H1 (cell line): ENCODE measurements at regions of chr13 and their contacts with region 1.

Region 1: GRCh38 chr13:36346222-36347083 is at the start of gene SPART:
- DNase-seq: peak; percentile 49 to 91
- H3K4me3 ChIP-seq: peak within 1 kb of the TSS; percentile 61 to 90 (median 84)
- H3K27ac ChIP-seq: peak within 1 kb of the TSS; percentile 85
- H3K4me1 ChIP-seq: peaks cover 0 to 3% (median 3%) of the 10 kb centered on the region in 4 experiments; a peak in 3 of 7 replicates
- H3K27me3 ChIP-seq: no peaks in the 10 kb centered on the region; a peak in 1 of 7 replicates
- CTCF ChIP-seq: peak; percentile 87 to 96 (median 89)
- EP300 ChIP-seq: no peak
- POLR2A ChIP-seq: no peak
- RAD21 ChIP-seq: peak; percentile 84 to 85
- total RNA-seq, gene SPART: 68.2 and 74.1 TPM in 2 replicates

Region 2: GRCh38 chr13:36231236-36231635 is 115.2 kb before region 1 on chr13:
- CTCF ChIA-PET with region 1: no interaction called
- POLR2A ChIA-PET with region 1: no interaction called
- DNase-seq: no peak
- H3K4me3 ChIP-seq: no peak overlapping the region
- H3K27ac ChIP-seq: no peak overlapping the region
- H3K4me1 ChIP-seq: no peaks in the 10 kb centered on the region
- H3K27me3 ChIP-seq: peaks cover 0 to 1% (median 0%) of the 10 kb centered on the region in 4 experiments; a peak in 1 of 7 replicates
- CTCF ChIP-seq: no peak
- EP300 ChIP-seq: no peak
- POLR2A ChIP-seq: no peak
- RAD21 ChIP-seq: no peak

Region 3: GRCh38 chr13:36282818-36283445 is 63.5 kb before region 1 on chr13:
- CTCF ChIA-PET with region 1: interaction called, 15 read pairs
- POLR2A ChIA-PET with region 1: interaction called, 8 read pairs
- DNase-seq: no peak
- H3K4me3 ChIP-seq: no peak overlapping the region
- H3K27ac ChIP-seq: no peak overlapping the region
- H3K4me1 ChIP-seq: no peaks in the 10 kb centered on the region
- H3K27me3 ChIP-seq: no peaks in the 10 kb centered on the region
- CTCF ChIP-seq: peak in 2 of 3 experiments; percentile 55 to 62; a peak in 2 of 4 replicates
- EP300 ChIP-seq: no peak
- POLR2A ChIP-seq: no peak
- RAD21 ChIP-seq: peak; percentile 86 to 91

Region 4: GRCh38 chr13:36297366-36298338 is 48.8 kb before region 1 on chr13 and contains the start of gene CCDC169:
- CTCF ChIA-PET with region 1: interaction called, 6 read pairs
- POLR2A ChIA-PET with region 1: interaction called, 31 read pairs
- DNase-seq: peak; percentile 83 to 94
- H3K4me3 ChIP-seq: peak within 1 kb of the TSS; percentile 66 to 82 (median 70)
- H3K27ac ChIP-seq: peak within 1 kb of the TSS; percentile 93
- H3K4me1 ChIP-seq: peaks cover 0 to 15% (median 12%) of the 10 kb centered on the region in 4 experiments; a peak in 3 of 7 replicates
- H3K27me3 ChIP-seq: no peaks in the 10 kb centered on the region
- CTCF ChIP-seq: no peak
- EP300 ChIP-seq: peak in 1 of 2 experiments; percentile 44; a peak in 1 of 3 replicates
- POLR2A ChIP-seq: peak; percentile 80 to 96
- RAD21 ChIP-seq: no peak; a peak in 1 of 4 replicates
- total RNA-seq, gene CCDC169: 43.3 and 44.0 TPM in 2 replicates

Region 5: DNA sequence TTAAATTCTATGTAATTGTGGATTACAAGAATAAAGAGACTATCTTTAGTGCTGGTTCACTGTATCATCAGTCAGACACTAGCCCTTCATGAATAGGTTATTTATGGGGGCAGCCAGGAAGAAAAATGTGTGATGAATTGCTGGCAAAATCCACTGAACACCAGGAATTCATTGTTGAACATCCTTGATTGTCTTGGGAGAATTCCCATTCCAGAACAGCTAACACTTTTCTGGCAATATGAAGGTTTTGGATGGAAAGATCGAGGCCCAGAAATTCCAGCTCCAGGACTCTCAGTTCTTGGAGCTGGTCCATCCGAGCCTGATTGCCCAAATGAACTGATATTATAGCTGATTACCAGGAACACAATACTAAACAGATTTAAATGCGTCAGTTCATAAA is 11.2 kb after region 1 on chr13:
- CTCF ChIA-PET with region 1: interaction called, 12 read pairs
- POLR2A ChIA-PET with region 1: interaction called, 4 read pairs
- DNase-seq: no peak
- H3K4me3 ChIP-seq: no peak overlapping the region
- H3K27ac ChIP-seq: no peak overlapping the region
- H3K4me1 ChIP-seq: no peaks in the 10 kb centered on the region
- H3K27me3 ChIP-seq: 0 out of 7 replicates have a peak, but pooled peaks cover 0 to 2% (median 0%) of the 10 kb centered on the region in 4 experiments
- CTCF ChIP-seq: no peak
- EP300 ChIP-seq: no peak
- POLR2A ChIP-seq: no peak
- RAD21 ChIP-seq: no peak

Region 6: DNA sequence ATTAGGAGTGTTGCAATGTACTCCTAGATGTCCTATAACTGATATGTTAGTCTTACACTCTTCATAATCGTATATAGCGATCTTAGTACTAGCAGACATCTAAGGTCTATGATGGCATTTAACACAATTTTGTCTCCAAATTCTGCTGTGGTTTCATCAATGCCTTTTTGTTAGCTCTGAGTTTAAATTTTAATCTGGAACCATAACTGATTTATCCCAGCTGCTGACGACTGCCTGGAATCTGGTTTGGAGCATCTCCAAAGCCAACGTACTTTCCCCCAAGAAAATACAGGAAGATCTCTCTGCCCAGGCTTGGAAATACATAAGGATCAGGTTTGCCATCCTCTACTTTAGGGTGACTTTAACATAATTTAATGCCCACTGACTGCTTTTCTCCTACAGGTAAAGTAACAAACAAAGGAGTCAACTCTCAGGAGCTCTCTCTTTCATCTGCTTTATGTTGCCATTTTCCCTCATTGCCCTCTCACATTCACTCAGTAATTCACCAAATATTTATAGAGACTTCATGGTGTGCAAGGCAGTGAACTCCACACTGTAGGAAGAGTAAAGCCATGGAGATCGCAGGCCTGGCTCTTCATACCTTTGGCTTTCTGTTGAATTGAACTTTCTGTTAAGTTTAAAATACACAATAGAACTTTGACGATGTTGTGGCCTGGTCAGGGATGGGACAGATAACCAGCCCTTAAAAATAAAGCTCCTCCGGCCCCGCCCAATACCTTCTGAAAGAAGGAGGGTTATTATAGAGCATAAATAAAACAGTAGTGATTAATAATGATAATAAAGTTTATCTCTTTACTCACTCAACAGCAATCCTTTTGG is 23.0 kb after region 1 on chr13:
- CTCF ChIA-PET with region 1: interaction called, 20 read pairs
- POLR2A ChIA-PET with region 1: interaction called, 4 read pairs
- DNase-seq: no peak
- H3K4me3 ChIP-seq: no peak overlapping the region
- H3K27ac ChIP-seq: no peak overlapping the region
- H3K4me1 ChIP-seq: no peaks in the 10 kb centered on the region
- H3K27me3 ChIP-seq: no peaks in the 10 kb centered on the region
- CTCF ChIP-seq: no peak
- EP300 ChIP-seq: no peak
- POLR2A ChIP-seq: no peak
- RAD21 ChIP-seq: no peak

Region 7: GRCh38 chr13:36431654-36432511 is 85.4 kb after region 1 on chr13 and contains the start of gene CCNA1:
- CTCF ChIA-PET with region 1: no interaction called
- POLR2A ChIA-PET with region 1: no interaction called
- DNase-seq: peak; percentile 69 to 91
- H3K4me3 ChIP-seq: peak within 1 kb of the TSS; percentile 56 to 84 (median 68)
- H3K27ac ChIP-seq: no peak within 1 kb of the TSS
- H3K4me1 ChIP-seq: peaks cover 0 to 5% (median 4%) of the 10 kb centered on the region in 4 experiments; a peak in 4 of 7 replicates
- H3K27me3 ChIP-seq: peaks cover 26 to 50% (median 43%) of the 10 kb centered on the region in 4 experiments
- CTCF ChIP-seq: no peak
- EP300 ChIP-seq: no peak
- POLR2A ChIP-seq: no peak
- RAD21 ChIP-seq: no peak
- total RNA-seq, gene CCNA1: 4.0 and 4.1 TPM in 2 replicates